ENCODE measurements at regions of chr20 and their contacts with region 1.

Region 1: GRCh38 chr20:9068851-9069663 is at the start of gene PLCB4:
- DNase-seq: peak in 3 of 4 donors; percentile 42 to 73 (median 63)
- ATAC-seq: peak; percentile 13
- H3K4me3 ChIP-seq: peak within 1 kb of the TSS; percentile 51 to 56
- H3K27ac ChIP-seq: peak within 1 kb of the TSS; percentile 78 to 88
- H3K4me1 ChIP-seq: peaks cover 0 to 19% of the 10 kb centered on the region in 2 donors
- H3K27me3 ChIP-seq: peaks cover 0 to 34% of the 10 kb centered on the region in 2 donors
- CTCF ChIP-seq: no peak
- polyA plus RNA-seq, gene PLCB4: 8.3 to 15.3 (median 10.9) TPM

Region 2: DNA sequence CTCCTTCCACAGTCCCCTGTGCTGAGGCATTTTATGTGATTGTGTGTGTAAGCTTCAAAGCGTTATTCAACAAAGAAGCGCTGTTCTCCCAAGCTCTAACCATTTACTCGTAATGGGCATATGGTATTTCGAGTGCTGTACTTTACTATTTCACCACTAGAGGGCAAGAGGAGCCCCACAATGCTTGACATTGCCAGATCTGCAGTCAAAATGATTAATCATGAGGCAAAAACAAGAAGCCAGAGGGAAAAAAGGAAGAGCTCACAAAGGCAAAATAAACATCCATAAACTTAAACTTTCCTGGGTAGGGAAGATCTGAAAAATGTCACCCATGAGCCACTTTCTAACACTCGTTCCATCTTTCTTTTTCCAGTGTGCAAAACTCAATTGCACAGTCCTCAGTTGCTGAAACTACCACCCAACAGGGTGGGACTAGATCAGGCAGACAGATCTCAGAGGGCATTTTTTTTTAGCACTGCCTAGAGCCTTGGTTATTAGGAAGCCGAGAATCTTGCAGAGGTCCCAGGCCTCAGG is 215.2 kb before region 1 on chr20:
- intact Hi-C with region 1: loop called in 1 of 2 experiments (anchors 10 kb)
- DNase-seq: peak in 2 of 4 donors; percentile 72 to 78
- ATAC-seq: peak; percentile 91
- H3K4me3 ChIP-seq: no peak overlapping the region
- H3K27ac ChIP-seq: peak overlapping the region; percentile 47 to 53
- H3K4me1 ChIP-seq: peaks cover 0 to 10% of the 10 kb centered on the region in 2 donors
- H3K27me3 ChIP-seq: no peaks in the 10 kb centered on the region
- CTCF ChIP-seq: peak; percentile 70 to 89

Region 3: DNA sequence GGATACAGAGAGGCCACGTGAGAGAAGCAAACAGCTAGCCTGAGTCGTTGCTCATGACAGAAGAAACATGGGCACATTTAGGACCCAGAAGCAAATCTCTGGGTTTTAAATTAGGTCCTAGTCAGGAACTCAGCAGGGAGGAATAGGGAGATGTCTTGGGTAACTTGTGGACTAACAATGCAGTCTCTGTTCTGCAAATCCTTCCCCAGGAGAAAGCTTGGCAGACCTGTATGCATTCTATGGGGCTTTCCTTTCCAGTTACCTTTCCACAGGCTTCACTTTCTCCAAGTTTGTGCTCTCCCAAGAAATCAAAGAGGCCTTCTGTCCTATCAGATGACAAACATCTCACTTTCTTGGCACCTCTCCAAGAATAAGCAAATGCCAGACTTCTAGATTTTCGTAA is 47.4 kb before region 1 on chr20:
- intact Hi-C with region 1: no loop called
- DNase-seq: no peak
- ATAC-seq: no peak
- H3K4me3 ChIP-seq: no peak overlapping the region
- H3K27ac ChIP-seq: no peak overlapping the region
- H3K4me1 ChIP-seq: no peaks in the 10 kb centered on the region
- H3K27me3 ChIP-seq: no peaks in the 10 kb centered on the region
- CTCF ChIP-seq: no peak

Measured in left lung (tissue), 14 donors.